Dendritic cell treated with granulocyte-macrophage colony-stimulating factor and Interleukin-4, amounts not matched to agents 40 ng/mL and 50 ng/mL, for 4 days (primary cell): ENCODE measurements at regions of chr18 and their contacts with region 1.

Region 1: GRCh38 chr18:48675352-48675761 is 136.5 kb downstream of the CTIF start:
- H3K4me3 Mint-ChIP-seq: no peak overlapping the region
- H3K27ac Mint-ChIP-seq: no peak overlapping the region
- H3K4me1 Mint-ChIP-seq: peaks cover 54% of the 10 kb centered on the region
- H3K27me3 Mint-ChIP-seq: no peaks in the 10 kb centered on the region

Region 2: GRCh38 chr18:48767090-48767690 is 91.8 kb after region 1 on chr18:
- intact Hi-C with region 1: loop called (anchors 5 kb)
- H3K4me3 Mint-ChIP-seq: no peak overlapping the region
- H3K27ac Mint-ChIP-seq: no peak overlapping the region
- H3K4me1 Mint-ChIP-seq: peaks cover 21% of the 10 kb centered on the region
- H3K27me3 Mint-ChIP-seq: peaks cover 12% of the 10 kb centered on the region

Region 3: GRCh38 chr18:49041435-49042245 is 366.3 kb after region 1 on chr18:
- intact Hi-C with region 1: loop called (anchors 5 kb)
- H3K4me3 Mint-ChIP-seq: no peak overlapping the region
- H3K27ac Mint-ChIP-seq: no peak overlapping the region
- H3K4me1 Mint-ChIP-seq: peaks cover 18% of the 10 kb centered on the region
- H3K27me3 Mint-ChIP-seq: no peaks in the 10 kb centered on the region

Region 4: GRCh38 chr18:49094136-49094535 is 418.8 kb after region 1 on chr18:
- intact Hi-C with region 1: no loop called
- H3K4me3 Mint-ChIP-seq: no peak overlapping the region
- H3K27ac Mint-ChIP-seq: no peak overlapping the region
- H3K4me1 Mint-ChIP-seq: peaks cover under 1% of the 10 kb centered on the region
- H3K27me3 Mint-ChIP-seq: no peaks in the 10 kb centered on the region

Region 5: DNA sequence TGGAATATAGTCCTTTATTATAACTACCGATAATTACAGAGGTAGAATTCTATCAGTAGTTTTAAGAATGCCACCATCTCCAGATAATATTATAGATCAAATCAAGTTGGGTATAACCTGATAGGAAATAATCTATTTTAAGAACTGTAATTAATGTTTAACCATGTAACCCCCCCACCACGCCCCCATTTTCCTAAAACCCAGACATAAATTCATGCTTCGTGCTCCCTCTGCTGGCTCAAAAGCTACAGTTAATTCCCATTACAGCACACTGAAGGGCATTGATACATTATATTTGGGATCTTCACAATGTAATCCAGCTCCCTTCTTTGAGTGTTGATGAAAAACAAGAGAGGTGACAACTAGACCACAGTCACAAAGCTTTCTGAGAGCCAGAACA is 503.4 kb after region 1 on chr18:
- intact Hi-C with region 1: loop called (anchors 1 kb)
- H3K4me3 Mint-ChIP-seq: no peak overlapping the region
- H3K27ac Mint-ChIP-seq: no peak overlapping the region
- H3K4me1 Mint-ChIP-seq: peaks cover 21% of the 10 kb centered on the region
- H3K27me3 Mint-ChIP-seq: peaks cover 11% of the 10 kb centered on the region

Region 6: GRCh38 chr18:49227441-49228165 is 552.2 kb after region 1 on chr18:
- intact Hi-C with region 1: loop called (anchors 5 kb)
- H3K4me3 Mint-ChIP-seq: no peak overlapping the region
- H3K27ac Mint-ChIP-seq: no peak overlapping the region
- H3K4me1 Mint-ChIP-seq: peaks cover 27% of the 10 kb centered on the region
- H3K27me3 Mint-ChIP-seq: peaks cover 6% of the 10 kb centered on the region

Region 7: DNA sequence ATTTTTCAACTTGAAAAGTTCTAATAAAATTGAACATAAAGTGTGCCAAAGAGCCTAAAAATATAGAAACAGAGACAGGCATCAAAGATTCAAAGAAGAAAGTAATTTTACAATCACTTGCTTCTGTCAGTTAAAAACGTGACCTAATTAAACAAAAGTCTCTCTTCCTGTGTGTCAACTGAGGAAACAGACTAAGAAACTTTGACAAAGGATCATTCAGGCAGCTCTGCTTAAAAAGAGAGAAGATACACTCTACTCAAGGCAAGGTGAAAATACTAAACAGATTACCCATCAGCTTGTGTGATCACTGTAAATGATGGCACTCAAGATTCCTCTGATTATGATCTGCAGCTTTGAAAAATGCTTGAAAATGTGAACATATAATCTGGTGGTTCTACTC is 737.3 kb after region 1 on chr18:
- intact Hi-C with region 1: loop called (anchors 2 kb)
- H3K4me3 Mint-ChIP-seq: no peak overlapping the region
- H3K27ac Mint-ChIP-seq: no peak overlapping the region
- H3K4me1 Mint-ChIP-seq: peaks cover 13% of the 10 kb centered on the region
- H3K27me3 Mint-ChIP-seq: no peaks in the 10 kb centered on the region

Region 8: GRCh38 chr18:49447810-49448745 is 772.7 kb after region 1 on chr18:
- intact Hi-C with region 1: loop called (anchors 10 kb)
- H3K4me3 Mint-ChIP-seq: no peak overlapping the region
- H3K27ac Mint-ChIP-seq: no peak overlapping the region
- H3K4me1 Mint-ChIP-seq: peaks cover 13% of the 10 kb centered on the region
- H3K27me3 Mint-ChIP-seq: no peaks in the 10 kb centered on the region